ENCODE measurements at regions of chr1 and their contacts with region 1.

Region 1: GRCh38 chr1:31422505-31423319 is 9.7 kb downstream of the SERINC2 start:
- DNase-seq: peak; percentile 84
- H3K4me3 ChIP-seq: no peak overlapping the region
- H3K27ac ChIP-seq: peak overlapping the region; percentile 55
- H3K4me1 ChIP-seq: no peaks in the 10 kb centered on the region
- H3K27me3 ChIP-seq: no peaks in the 10 kb centered on the region
- CTCF ChIP-seq: peak; percentile 89

Region 2: DNA sequence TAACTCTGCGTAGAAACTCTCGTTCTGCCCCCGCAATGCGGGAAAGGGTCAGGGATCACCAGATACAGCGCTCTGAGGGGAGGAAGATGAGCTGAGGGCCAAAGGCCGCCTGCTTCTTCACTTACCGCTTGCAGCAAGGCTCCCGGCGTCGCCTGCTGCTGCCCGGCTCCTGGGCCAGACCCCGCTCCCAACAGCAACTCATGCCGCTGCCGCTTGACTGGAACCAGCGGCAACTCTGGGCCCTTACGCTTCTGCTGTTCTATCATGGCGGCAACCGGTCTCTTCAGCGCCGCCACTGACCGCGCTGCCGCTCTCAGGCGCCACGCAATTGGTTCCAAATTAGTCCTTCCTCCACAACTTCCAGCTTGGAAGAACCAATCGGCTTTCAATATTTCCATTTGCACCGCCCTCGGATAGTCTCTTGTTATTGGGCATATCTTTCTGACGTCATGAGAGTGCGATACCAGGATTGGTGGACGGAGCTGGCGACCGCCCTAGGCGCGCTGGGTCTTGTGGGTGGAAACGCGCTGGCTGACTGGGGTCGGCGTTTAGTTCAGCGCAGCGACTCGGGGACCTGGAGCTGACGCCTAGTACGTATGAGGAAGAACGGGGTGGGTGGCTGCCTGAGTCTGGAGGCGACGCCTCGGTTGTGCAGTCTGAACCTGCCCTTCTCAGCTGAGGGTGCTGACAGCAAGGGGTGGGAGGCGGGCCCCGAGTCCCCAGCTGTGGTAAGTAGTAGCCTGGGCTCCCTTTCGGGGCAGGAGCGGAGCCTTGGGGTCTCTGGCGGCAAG is 126.0 kb before region 1 on chr1 and contains the starts of genes SNRNP40 and ZCCHC17:
- intact Hi-C with region 1: loop called (anchors 10 kb)
- DNase-seq: peak; percentile 97
- H3K4me3 ChIP-seq: peak within 1 kb of the TSS; percentile 94
- H3K27ac ChIP-seq: peak within 1 kb of the TSS; percentile 79
- H3K4me1 ChIP-seq: no peaks in the 10 kb centered on the region
- H3K27me3 ChIP-seq: no peaks in the 10 kb centered on the region
- CTCF ChIP-seq: no peak
- total RNA-seq, gene SNRNP40: 34.7 to 59.6 TPM
- total RNA-seq, gene ZCCHC17: 19.8 to 23.9 TPM

Region 3: GRCh38 chr1:31394628-31395193 is 28.0 kb before region 1 on chr1:
- intact Hi-C with region 1: loop called (anchors 2 kb)
- DNase-seq: peak; percentile 95
- H3K4me3 ChIP-seq: peak overlapping the region; percentile 37
- H3K27ac ChIP-seq: no peak overlapping the region
- H3K4me1 ChIP-seq: no peaks in the 10 kb centered on the region
- H3K27me3 ChIP-seq: no peaks in the 10 kb centered on the region
- CTCF ChIP-seq: peak; percentile 85

Region 4: GRCh38 chr1:31523769-31524168 is 101.1 kb after region 1 on chr1:
- intact Hi-C with region 1: no loop called
- DNase-seq: peak; percentile 47
- H3K4me3 ChIP-seq: no peak overlapping the region
- H3K27ac ChIP-seq: peak overlapping the region; percentile 27
- H3K4me1 ChIP-seq: no peaks in the 10 kb centered on the region
- H3K27me3 ChIP-seq: no peaks in the 10 kb centered on the region
- CTCF ChIP-seq: no peak

Measured in colonic mucosa (tissue), 4 donors.